ENCODE measurements at regions of chr22 and their contacts with region 1.

Region 1: DNA sequence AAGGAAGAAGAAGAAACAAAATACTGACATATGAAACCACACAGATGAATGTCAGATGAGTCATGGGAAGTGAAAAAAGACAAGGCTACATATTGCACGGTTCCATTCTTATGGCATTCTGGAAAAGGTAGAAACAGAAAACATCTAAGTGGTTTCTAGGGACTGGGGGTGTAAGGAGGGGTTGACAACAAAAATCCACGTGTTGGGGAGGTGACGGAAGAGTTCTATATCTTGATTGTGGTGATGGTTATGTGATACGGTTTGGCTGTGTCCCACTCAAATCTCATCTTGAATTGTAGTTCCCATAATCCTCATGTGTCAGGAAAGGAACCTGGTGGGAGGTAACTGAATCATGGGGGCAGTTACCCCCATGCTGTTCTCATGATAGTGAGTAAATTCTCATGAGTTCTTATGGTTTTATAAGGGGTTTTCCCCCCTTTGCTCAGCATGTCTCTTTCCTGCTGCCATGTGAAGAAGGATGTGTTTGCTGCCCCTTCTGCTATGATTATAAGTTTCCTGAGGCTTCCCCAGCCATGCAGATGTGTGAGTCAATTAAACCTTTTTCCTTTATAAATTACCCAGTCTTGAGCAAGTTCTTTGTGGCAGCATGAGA is 6.4 kb upstream of the ARFGAP3 start:
- DNase-seq: peak; percentile 52
- H3K4me3 Mint-ChIP-seq: no peak overlapping the region
- H3K27ac Mint-ChIP-seq: peak overlapping the region; percentile 27
- H3K4me1 Mint-ChIP-seq: peaks cover 20% of the 10 kb centered on the region
- H3K27me3 Mint-ChIP-seq: no peaks in the 10 kb centered on the region

Region 2: GRCh38 chr22:42444077-42444904 is 419.2 kb before region 1 on chr22:
- CTCF ChIA-PET with region 1: no interaction called
- intact Hi-C with region 1: no loop called
- DNase-seq: peak; percentile 92
- H3K4me3 Mint-ChIP-seq: peak overlapping the region; percentile 71
- H3K27ac Mint-ChIP-seq: peak overlapping the region; percentile 87
- H3K4me1 Mint-ChIP-seq: peaks cover 32% of the 10 kb centered on the region
- H3K27me3 Mint-ChIP-seq: no peaks in the 10 kb centered on the region

Region 3: GRCh38 chr22:42614312-42615091 is 249.0 kb before region 1 on chr22 and contains the start of gene POLDIP3:
- CTCF ChIA-PET with region 1: no interaction called
- intact Hi-C with region 1: loop called (anchors 2 kb)
- DNase-seq: peak; percentile 99
- H3K4me3 Mint-ChIP-seq: peak within 1 kb of the TSS; percentile 91
- H3K27ac Mint-ChIP-seq: peak within 1 kb of the TSS; percentile 100
- H3K4me1 Mint-ChIP-seq: peaks cover 50% of the 10 kb centered on the region
- H3K27me3 Mint-ChIP-seq: no peaks in the 10 kb centered on the region
- total RNA-seq, gene POLDIP3: 83.7 to 93.8 TPM

Region 4: GRCh38 chr22:42780070-42780540 is 83.3 kb before region 1 on chr22:
- CTCF ChIA-PET with region 1: interaction called, 7 read pairs
- intact Hi-C with region 1: loop called (anchors 1 kb)
- DNase-seq: peak; percentile 64
- H3K4me3 Mint-ChIP-seq: no peak overlapping the region
- H3K27ac Mint-ChIP-seq: no peak overlapping the region
- H3K4me1 Mint-ChIP-seq: no peaks in the 10 kb centered on the region
- H3K27me3 Mint-ChIP-seq: no peaks in the 10 kb centered on the region

Region 5: GRCh38 chr22:42895087-42895486 is 31.6 kb after region 1 on chr22:
- CTCF ChIA-PET with region 1: interaction called, 5 read pairs
- intact Hi-C with region 1: loop called (anchors 1 kb)
- DNase-seq: peak; percentile 57
- H3K4me3 Mint-ChIP-seq: peak overlapping the region; percentile 35
- H3K27ac Mint-ChIP-seq: peak overlapping the region; percentile 74
- H3K4me1 Mint-ChIP-seq: peaks cover 38% of the 10 kb centered on the region
- H3K27me3 Mint-ChIP-seq: no peaks in the 10 kb centered on the region

Region 6: GRCh38 chr22:43036282-43036829 is 172.9 kb after region 1 on chr22:
- CTCF ChIA-PET with region 1: interaction called, 28 read pairs
- intact Hi-C with region 1: loop called (anchors 1 kb)
- DNase-seq: no peak
- H3K4me3 Mint-ChIP-seq: no peak overlapping the region
- H3K27ac Mint-ChIP-seq: no peak overlapping the region
- H3K4me1 Mint-ChIP-seq: peaks cover 4% of the 10 kb centered on the region
- H3K27me3 Mint-ChIP-seq: no peaks in the 10 kb centered on the region

Region 7: GRCh38 chr22:43230971-43231723 is 367.7 kb after region 1 on chr22:
- CTCF ChIA-PET with region 1: no interaction called
- intact Hi-C with region 1: no loop called
- DNase-seq: peak; percentile 74
- H3K4me3 Mint-ChIP-seq: no peak overlapping the region
- H3K27ac Mint-ChIP-seq: no peak overlapping the region
- H3K4me1 Mint-ChIP-seq: peaks cover 2% of the 10 kb centered on the region
- H3K27me3 Mint-ChIP-seq: no peaks in the 10 kb centered on the region